WTC11 (cell line): ENCODE measurements at regions of chr21 and their contacts with region 1.

Region 1: GRCh38 chr21:36630485-36631206 is 68.3 kb upstream of the SIM2 start:
- DNase-seq: peak; percentile 91
- ATAC-seq: peak; percentile 95
- H3K4me3 Mint-ChIP-seq: no peak overlapping the region
- H3K27ac Mint-ChIP-seq: no peak overlapping the region
- H3K4me1 Mint-ChIP-seq: peaks cover 11% of the 10 kb centered on the region
- H3K27me3 Mint-ChIP-seq: peaks cover 8% of the 10 kb centered on the region
- CTCF ChIP-seq: peak; percentile 89

Region 2: DNA sequence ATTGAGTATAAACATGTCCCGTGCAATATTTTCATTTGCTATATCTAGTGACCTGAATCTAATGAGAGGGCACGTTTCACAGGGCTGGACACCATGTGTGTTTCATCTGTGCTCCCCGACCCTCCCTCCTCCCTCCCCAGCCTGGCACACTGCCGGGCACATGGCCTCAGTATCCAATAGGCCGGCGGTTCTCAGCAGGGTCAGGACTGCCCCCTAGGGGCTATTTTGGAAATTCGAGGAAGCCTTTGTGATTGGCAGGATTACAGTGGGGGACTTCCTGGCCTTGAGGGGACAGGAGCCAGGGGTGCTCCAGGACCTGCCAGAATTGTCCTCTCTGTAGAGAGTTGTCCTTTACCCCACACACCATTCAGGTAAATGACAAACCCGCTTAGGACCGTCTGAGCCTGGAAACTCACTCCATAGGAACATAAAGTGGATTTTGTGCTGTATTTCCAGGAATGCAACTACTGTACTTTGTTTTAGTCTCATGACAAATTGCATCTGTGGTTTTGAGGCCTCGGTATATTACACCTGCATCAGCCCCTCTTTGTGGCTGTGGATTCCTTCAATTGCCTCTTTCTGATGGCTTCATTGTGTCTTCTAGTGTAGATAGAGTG is 41.2 kb before region 1 on chr21:
- CTCF ChIA-PET with region 1: interaction called, 13 read pairs
- POLR2A ChIA-PET with region 1: no interaction called
- DNase-seq: peak; percentile 60
- ATAC-seq: peak; percentile 74
- H3K4me3 Mint-ChIP-seq: no peak overlapping the region
- H3K27ac Mint-ChIP-seq: no peak overlapping the region; the same call in 1 of the 2 replicates
- H3K4me1 Mint-ChIP-seq: no peaks in the 10 kb centered on the region
- H3K27me3 Mint-ChIP-seq: peaks cover 2% of the 10 kb centered on the region; the same call in 1 of the 2 replicates
- CTCF ChIP-seq: peak; percentile 51; the same call in 1 of the 2 replicates

Region 3: GRCh38 chr21:36640721-36641244 is 10.1 kb after region 1 on chr21:
- CTCF ChIA-PET with region 1: interaction called, 32 read pairs
- POLR2A ChIA-PET with region 1: no interaction called
- DNase-seq: no peak
- ATAC-seq: peak; percentile 59; the same call in 1 of the 2 replicates
- H3K4me3 Mint-ChIP-seq: no peak overlapping the region
- H3K27ac Mint-ChIP-seq: no peak overlapping the region
- H3K4me1 Mint-ChIP-seq: peaks cover 11% of the 10 kb centered on the region
- H3K27me3 Mint-ChIP-seq: no peaks in the 10 kb centered on the region
- CTCF ChIP-seq: no peak

Region 4: DNA sequence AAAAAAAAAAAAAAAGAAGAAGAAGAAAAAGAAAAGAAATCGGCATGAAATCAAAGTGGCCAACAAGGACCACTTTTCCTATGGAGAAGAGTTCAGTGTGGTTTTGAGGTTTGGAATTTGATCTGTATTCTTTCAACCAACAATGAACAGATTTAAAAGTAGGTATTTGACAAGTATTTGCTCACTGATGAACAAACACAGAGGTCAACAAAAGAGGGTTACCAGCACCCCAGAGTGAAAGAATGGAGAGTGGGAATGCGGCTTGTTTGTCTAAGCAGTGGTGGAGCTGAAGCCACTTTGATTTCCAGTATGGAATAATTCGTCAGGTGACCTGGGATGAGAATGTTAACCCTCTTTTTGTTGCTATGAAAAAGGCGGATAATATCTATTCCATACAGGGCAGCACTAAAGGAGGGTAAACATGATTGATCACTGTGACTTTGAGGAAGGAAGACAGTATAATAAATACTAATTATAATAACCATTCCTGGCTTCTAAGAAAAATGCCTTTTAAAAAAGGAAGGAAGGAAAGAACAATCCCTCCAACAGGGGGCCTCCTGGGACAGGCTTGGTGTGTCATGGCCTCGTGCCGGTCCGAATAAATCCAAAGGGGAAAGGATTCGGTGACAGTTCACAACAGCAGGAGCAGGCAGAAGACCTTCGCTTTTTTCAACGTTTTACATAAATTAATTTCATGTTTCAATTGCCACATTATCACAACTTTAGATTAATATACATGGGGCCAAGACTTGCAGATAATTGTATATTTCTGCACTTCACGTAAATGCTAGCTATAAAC is 31.1 kb after region 1 on chr21:
- CTCF ChIA-PET with region 1: interaction called, 20 read pairs
- POLR2A ChIA-PET with region 1: no interaction called
- DNase-seq: peak; percentile 51
- ATAC-seq: peak; percentile 80
- H3K4me3 Mint-ChIP-seq: no peak overlapping the region
- H3K27ac Mint-ChIP-seq: no peak overlapping the region
- H3K4me1 Mint-ChIP-seq: peaks cover 7% of the 10 kb centered on the region
- H3K27me3 Mint-ChIP-seq: peaks cover 3% of the 10 kb centered on the region
- CTCF ChIP-seq: peak; percentile 41

Region 5: DNA sequence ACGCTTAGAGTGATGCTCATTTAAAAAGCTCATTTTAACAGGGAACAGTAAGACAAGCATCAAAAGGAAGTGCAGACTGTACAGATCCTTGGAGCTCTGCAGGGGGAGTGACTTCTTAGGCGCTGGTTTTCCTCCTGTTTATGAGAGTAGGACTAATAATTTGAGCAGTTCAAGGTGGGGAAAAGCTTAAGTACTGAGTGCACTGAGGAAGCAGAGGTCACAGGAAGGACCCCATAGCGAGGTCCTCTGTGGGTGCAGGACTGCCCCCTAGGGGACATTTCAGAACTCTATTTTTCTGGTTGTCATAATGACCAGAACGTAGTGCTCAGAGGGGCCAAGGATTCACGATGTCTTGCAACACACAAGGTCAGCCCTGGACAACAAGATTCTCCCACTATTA is 223.7 kb after region 1 on chr21:
- CTCF ChIA-PET with region 1: interaction called, 14 read pairs
- POLR2A ChIA-PET with region 1: no interaction called
- DNase-seq: peak; percentile 69
- ATAC-seq: peak; percentile 95
- H3K4me3 Mint-ChIP-seq: no peak overlapping the region
- H3K27ac Mint-ChIP-seq: no peak overlapping the region
- H3K4me1 Mint-ChIP-seq: peaks cover 8% of the 10 kb centered on the region
- H3K27me3 Mint-ChIP-seq: no peaks in the 10 kb centered on the region; the same call in 1 of the 2 replicates
- CTCF ChIP-seq: peak; percentile 67

Region 6: DNA sequence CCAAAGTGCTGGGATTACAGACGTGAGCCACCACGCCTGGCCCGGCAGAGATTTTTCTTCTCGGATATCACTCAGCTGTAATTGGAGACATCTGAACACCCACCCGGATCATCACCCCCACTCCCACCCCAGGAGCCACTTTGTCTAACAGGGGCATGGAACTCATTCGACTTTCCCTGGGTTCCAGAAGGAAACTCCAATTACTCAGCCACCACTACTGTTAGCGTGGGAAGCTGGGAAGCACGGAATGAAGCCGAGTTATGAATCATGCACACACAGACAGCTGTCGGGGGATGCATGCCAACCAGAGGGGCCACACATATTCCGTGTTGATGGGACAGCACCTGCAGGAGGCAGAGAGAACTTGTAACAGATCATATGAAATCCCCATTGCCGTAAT is 250.6 kb after region 1 on chr21:
- CTCF ChIA-PET with region 1: no interaction called
- POLR2A ChIA-PET with region 1: no interaction called
- DNase-seq: no peak
- ATAC-seq: no peak
- H3K4me3 Mint-ChIP-seq: no peak overlapping the region
- H3K27ac Mint-ChIP-seq: no peak overlapping the region
- H3K4me1 Mint-ChIP-seq: no peaks in the 10 kb centered on the region
- H3K27me3 Mint-ChIP-seq: peaks cover 4% of the 10 kb centered on the region; the same call in 1 of the 2 replicates
- CTCF ChIP-seq: no peak